H1 (cell line): ENCODE measurements at regions of chr11 and their contacts with region 1.

Region 1: GRCh38 chr11:107741044-107741823 is 29.4 kb upstream of the SLN start:
- DNase-seq: peak in 1 of 2 experiments; percentile 54
- H3K4me3 ChIP-seq: no peak overlapping the region
- H3K27ac ChIP-seq: no peak overlapping the region
- H3K4me1 ChIP-seq: peaks cover 0 to 3% (median 0%) of the 10 kb centered on the region in 4 experiments; a peak in 2 of 7 replicates
- H3K27me3 ChIP-seq: no peaks in the 10 kb centered on the region
- CTCF ChIP-seq: peak in 2 of 3 experiments; percentile 63 to 86; a peak in 3 of 4 replicates
- EP300 ChIP-seq: no peak
- POLR2A ChIP-seq: no peak
- RAD21 ChIP-seq: peak; percentile 64 to 75

Region 2: GRCh38 chr11:107505647-107506225 is 235.5 kb before region 1 on chr11:
- CTCF ChIA-PET with region 1: no interaction called
- POLR2A ChIA-PET with region 1: no interaction called
- DNase-seq: no peak
- H3K4me3 ChIP-seq: no peak overlapping the region
- H3K27ac ChIP-seq: no peak overlapping the region
- H3K4me1 ChIP-seq: no peaks in the 10 kb centered on the region
- H3K27me3 ChIP-seq: no peaks in the 10 kb centered on the region
- CTCF ChIP-seq: no peak
- EP300 ChIP-seq: no peak
- POLR2A ChIP-seq: no peak
- RAD21 ChIP-seq: no peak

Region 3: DNA sequence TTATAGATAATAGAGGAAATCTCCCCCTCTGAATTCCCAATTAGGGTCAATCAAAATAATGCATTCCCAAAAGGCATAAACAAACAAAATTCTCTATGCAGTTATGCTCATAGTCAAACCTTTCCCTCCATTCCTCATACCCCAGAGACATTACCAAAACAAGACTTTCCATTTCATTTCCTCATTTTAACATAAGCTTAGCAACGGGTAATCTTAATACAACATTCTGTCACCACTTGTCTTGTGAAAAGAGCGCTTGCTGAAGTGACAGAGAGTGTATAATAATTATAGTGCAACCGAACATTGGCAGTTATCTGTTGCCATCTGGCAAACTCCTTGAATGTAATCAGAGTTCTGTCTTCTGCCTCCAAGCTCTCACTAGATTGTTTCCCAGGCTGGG is 28.2 kb before region 1 on chr11:
- CTCF ChIA-PET with region 1: interaction called, 10 read pairs
- POLR2A ChIA-PET with region 1: no interaction called
- DNase-seq: no peak
- H3K4me3 ChIP-seq: no peak overlapping the region
- H3K27ac ChIP-seq: no peak overlapping the region
- H3K4me1 ChIP-seq: peaks cover 0 to 3% (median 0%) of the 10 kb centered on the region in 4 experiments; a peak in 1 of 7 replicates
- H3K27me3 ChIP-seq: no peaks in the 10 kb centered on the region
- CTCF ChIP-seq: no peak
- EP300 ChIP-seq: no peak
- POLR2A ChIP-seq: no peak
- RAD21 ChIP-seq: no peak

Region 4: GRCh38 chr11:107757661-107758060 is 16.4 kb after region 1 on chr11:
- CTCF ChIA-PET with region 1: interaction called, 82 read pairs
- POLR2A ChIA-PET with region 1: no interaction called
- DNase-seq: no peak
- H3K4me3 ChIP-seq: no peak overlapping the region
- H3K27ac ChIP-seq: no peak overlapping the region
- H3K4me1 ChIP-seq: no peaks in the 10 kb centered on the region
- H3K27me3 ChIP-seq: no peaks in the 10 kb centered on the region
- CTCF ChIP-seq: peak; percentile 25 to 63 (median 37)
- EP300 ChIP-seq: no peak
- POLR2A ChIP-seq: no peak
- RAD21 ChIP-seq: peak; percentile 27 to 51; a peak in 3 of 4 replicates

Region 5: GRCh38 chr11:107799218-107799859 is 58.1 kb after region 1 on chr11:
- CTCF ChIA-PET with region 1: interaction called, 31 read pairs
- POLR2A ChIA-PET with region 1: no interaction called
- DNase-seq: peak; percentile 9 to 82
- H3K4me3 ChIP-seq: no peak overlapping the region
- H3K27ac ChIP-seq: no peak overlapping the region
- H3K4me1 ChIP-seq: no peaks in the 10 kb centered on the region
- H3K27me3 ChIP-seq: no peaks in the 10 kb centered on the region
- CTCF ChIP-seq: peak; percentile 66 to 90 (median 87)
- EP300 ChIP-seq: no peak
- POLR2A ChIP-seq: no peak
- RAD21 ChIP-seq: peak; percentile 63 to 71

Region 6: GRCh38 chr11:107916671-107917241 is 175.5 kb after region 1 on chr11:
- CTCF ChIA-PET with region 1: no interaction called
- POLR2A ChIA-PET with region 1: no interaction called
- DNase-seq: no peak
- H3K4me3 ChIP-seq: no peak overlapping the region
- H3K27ac ChIP-seq: no peak overlapping the region
- H3K4me1 ChIP-seq: no peaks in the 10 kb centered on the region
- H3K27me3 ChIP-seq: no peaks in the 10 kb centered on the region
- CTCF ChIP-seq: no peak
- EP300 ChIP-seq: no peak
- POLR2A ChIP-seq: no peak
- RAD21 ChIP-seq: no peak

Region 7: GRCh38 chr11:108206969-108207682 is 465.9 kb after region 1 on chr11:
- CTCF ChIA-PET with region 1: no interaction called
- POLR2A ChIA-PET with region 1: no interaction called
- DNase-seq: no peak
- H3K4me3 ChIP-seq: no peak overlapping the region
- H3K27ac ChIP-seq: no peak overlapping the region
- H3K4me1 ChIP-seq: no peaks in the 10 kb centered on the region; a peak in 1 of 7 replicates
- H3K27me3 ChIP-seq: no peaks in the 10 kb centered on the region
- CTCF ChIP-seq: no peak
- EP300 ChIP-seq: no peak
- POLR2A ChIP-seq: no peak
- RAD21 ChIP-seq: no peak